ENCODE measurements at regions of chr16 and their contacts with region 1.

Region 1: DNA sequence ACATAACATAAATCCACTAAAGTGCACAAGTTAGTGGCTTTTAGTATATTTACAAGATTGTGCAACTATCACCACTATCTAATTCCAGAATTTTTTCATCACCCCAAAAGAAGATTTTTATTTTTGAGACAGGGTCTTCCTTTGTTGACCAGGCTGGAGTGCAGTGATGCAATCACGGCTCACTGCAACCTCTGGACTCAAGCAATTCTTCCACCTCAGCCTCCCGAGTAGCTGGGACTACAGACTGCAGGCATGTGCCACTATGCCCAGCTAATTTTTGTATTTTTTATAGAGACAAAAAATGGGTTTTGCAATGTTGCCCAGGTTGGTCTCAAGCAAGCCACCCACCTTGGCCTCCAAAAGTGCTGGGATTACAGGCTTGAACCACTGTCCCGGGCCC is 15.1 kb downstream of the DRC7 start:
- DNase-seq: no peak
- H3K4me3 ChIP-seq: no peak overlapping the region
- H3K27ac ChIP-seq: no peak overlapping the region
- H3K4me1 ChIP-seq: no peaks in the 10 kb centered on the region
- H3K27me3 ChIP-seq: no peaks in the 10 kb centered on the region
- CTCF ChIP-seq: no peak

Region 2: DNA sequence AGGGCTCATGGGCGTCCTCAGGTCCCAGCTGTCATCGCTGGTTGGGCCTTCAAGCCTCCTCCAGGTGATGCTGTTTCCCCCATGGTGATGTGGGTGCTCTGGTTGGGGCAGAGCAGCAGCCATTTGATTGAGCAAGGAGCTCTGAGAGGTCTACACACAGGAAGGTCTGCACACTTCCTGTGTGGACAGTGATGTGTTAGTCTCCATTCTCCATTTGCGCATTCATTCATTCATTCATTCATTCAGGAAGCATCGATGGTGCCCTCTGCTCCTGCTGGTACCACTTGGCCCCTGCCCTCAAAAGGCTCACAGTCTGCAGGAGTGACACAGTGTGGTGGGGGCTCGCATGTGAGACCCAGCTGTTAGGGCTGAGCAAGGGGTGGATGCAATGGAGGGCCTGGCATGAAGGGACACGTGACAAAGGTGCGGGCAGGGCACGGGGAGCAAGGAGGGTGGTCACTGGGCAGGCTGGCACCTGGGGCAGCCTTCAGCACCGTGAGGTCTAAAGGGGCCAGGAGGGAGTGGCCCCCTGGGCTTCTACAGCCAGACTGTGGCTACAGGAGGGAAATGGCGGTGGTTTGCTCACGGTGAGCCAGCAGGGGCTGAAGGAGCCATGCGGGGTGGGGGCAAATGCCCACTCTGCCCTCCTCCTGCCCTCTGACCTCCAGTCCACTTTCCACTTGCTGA is 40.0 kb before region 1 on chr16:
- CTCF ChIA-PET with region 1: no interaction called
- POLR2A ChIA-PET with region 1: no interaction called
- intact Hi-C with region 1: no loop called
- DNase-seq: no peak
- H3K4me3 ChIP-seq: no peak overlapping the region
- H3K27ac ChIP-seq: no peak overlapping the region
- H3K4me1 ChIP-seq: no peaks in the 10 kb centered on the region
- H3K27me3 ChIP-seq: no peaks in the 10 kb centered on the region
- CTCF ChIP-seq: no peak

Region 3: DNA sequence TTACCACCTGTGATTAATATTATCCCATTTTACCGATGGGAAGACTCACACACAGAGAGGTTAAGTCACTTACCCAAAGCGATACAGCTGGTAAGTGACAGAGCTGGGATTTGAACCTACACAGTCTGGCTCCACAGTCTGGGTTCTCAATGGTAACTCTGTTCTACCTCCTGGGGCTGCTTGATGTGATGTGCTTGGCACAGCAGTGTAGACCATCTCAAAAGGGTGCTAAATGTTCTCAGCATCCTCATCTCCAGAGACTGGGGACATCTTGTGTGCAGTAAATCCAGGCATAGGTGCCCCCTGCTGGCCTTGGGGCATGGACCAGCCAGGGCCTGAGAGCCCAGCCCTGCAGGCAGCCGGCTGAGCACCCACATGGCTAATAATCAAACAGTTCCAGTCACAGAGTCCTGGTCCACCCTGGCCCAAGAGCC is 10.5 kb after region 1 on chr16:
- CTCF ChIA-PET with region 1: no interaction called
- POLR2A ChIA-PET with region 1: interaction called, 12 read pairs
- intact Hi-C with region 1: no loop called
- DNase-seq: peak; percentile 19
- H3K4me3 ChIP-seq: no peak overlapping the region
- H3K27ac ChIP-seq: no peak overlapping the region
- H3K4me1 ChIP-seq: no peaks in the 10 kb centered on the region
- H3K27me3 ChIP-seq: no peaks in the 10 kb centered on the region
- CTCF ChIP-seq: peak; percentile 43

Region 4: DNA sequence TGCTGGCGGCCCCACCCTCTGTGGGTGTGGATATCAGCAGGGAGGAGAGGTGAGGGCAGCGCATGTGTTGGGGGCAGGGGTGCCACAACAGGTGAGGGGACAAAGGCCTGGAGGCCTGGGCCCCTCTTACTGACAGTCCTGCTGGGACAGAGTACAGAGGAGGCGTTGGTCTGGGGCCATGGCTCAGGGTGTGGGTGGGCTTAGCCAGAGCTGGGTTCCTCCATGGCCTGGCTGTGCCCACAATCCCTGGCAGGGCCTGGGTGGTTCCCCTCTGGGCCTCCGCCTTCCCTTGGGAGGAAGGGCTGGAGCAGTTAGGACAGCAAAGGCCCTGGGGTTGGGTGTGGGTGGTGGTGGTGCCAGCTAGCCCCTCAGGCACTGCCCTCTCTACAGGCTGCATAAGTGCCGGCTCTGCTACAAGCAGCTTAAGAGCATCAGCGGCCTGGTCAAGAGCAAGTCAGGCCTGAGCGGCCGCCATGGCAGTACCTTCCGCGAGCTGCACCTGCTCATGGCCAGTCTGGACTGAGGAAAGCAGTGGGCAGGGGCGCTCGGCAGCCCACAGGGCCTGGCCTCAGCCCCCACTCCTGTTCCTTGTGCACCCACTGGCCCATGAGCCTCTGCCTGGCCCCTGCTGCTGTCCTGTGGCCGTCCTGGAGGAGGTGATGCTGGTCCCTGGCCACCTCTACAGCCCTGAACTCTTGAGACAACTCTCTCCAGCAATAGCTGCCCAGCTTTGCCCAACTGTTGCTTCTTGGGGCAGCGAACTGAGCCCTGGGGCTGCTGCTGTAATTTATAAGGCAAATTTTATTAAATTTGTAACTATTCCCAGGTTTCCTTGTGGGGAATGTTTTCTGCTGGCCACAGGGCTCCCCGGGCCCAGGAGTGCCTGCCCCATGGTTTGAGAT is 47.0 kb after region 1 on chr16:
- CTCF ChIA-PET with region 1: no interaction called
- POLR2A ChIA-PET with region 1: no interaction called
- intact Hi-C with region 1: no loop called
- DNase-seq: no peak
- H3K4me3 ChIP-seq: no peak overlapping the region
- H3K27ac ChIP-seq: peak overlapping the region; percentile 78
- H3K4me1 ChIP-seq: peaks cover 28% of the 10 kb centered on the region
- H3K27me3 ChIP-seq: no peaks in the 10 kb centered on the region
- CTCF ChIP-seq: no peak

Region 5: DNA sequence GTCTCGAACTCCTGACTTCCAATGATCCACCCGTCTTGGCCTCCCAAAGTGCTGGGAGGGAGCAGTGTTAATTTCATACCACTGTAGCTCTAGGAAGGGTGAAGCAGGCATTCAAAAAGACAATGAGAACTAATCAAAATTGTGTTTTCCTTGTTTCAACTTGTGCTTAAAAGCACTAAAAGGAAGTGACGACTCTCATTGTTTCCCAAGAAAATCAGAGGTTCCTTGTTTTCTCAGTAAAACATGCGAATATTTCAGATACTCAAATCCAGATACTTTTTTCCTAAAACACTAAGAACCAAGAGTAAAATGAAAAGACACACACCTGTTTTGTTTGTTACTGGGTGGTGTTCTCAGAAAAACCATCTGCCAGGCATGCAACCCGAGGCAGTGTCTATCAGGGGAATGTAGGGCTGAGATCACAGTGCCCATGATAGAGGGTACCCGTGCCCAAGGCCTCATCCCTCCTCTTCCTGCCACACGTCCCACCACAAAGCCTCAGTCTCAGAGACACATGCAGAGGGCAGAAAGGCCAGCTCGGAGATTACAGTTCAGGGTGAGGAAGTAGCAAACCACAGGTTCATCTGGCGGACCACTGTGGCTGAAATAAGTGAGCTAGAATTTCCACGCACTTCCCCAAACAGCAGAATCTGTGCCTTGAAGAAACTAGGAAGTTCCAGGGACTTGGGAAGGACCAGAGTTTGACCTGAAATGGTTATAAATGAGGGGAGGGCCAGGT is 716.3 kb after region 1 on chr16:
- CTCF ChIA-PET with region 1: no interaction called
- POLR2A ChIA-PET with region 1: no interaction called
- intact Hi-C with region 1: no loop called
- DNase-seq: no peak
- H3K4me3 ChIP-seq: no peak overlapping the region
- H3K27ac ChIP-seq: no peak overlapping the region
- H3K4me1 ChIP-seq: no peaks in the 10 kb centered on the region
- H3K27me3 ChIP-seq: no peaks in the 10 kb centered on the region
- CTCF ChIP-seq: no peak